HEK293T (cell line): ENCODE measurements at regions of chr6 and their contacts with region 1.

Region 1: GRCh38 chr6:134882426-134883038 is 67.4 kb downstream of the ALDH8A1 start:
- DNase-seq: peak; percentile 76

Region 2: GRCh38 chr6:134822920-134823709 is 59.4 kb before region 1 on chr6:
- CTCF ChIA-PET with region 1: interaction called, 10 read pairs
- POLR2A ChIA-PET with region 1: no interaction called
- DNase-seq: peak; percentile 89

Region 3: GRCh38 chr6:134903448-134903847 is 20.9 kb after region 1 on chr6:
- CTCF ChIA-PET with region 1: no interaction called
- POLR2A ChIA-PET with region 1: no interaction called
- DNase-seq: no peak

Region 4: DNA sequence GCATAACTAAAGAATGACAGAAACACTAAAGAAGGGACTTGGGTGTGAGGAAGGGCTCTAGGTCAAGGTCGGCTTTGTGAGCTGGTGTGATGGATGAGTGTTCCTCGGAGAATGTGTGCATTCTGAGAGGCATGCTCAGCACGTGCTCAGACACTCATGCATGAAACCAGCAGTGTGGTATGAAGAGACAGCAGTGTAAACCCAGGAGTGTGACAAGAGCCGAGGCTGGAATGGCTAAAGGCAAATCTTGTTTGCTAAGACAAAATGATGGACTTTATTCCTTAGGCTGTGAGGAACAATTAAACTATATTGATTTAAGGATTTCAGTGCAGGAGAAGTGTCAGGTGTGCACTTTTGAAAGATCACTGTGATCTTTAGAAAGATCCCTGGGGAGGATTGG is 1775.1 kb after region 1 on chr6:
- CTCF ChIA-PET with region 1: no interaction called
- POLR2A ChIA-PET with region 1: no interaction called
- DNase-seq: no peak